Activated CD4-positive, alpha-beta T cell treated with anti-CD3 and anti-CD28 coated beads for 36 hours (primary cell): ENCODE measurements at regions of chr21 and their contacts with region 1.

Region 1: GRCh38 chr21:25464275-25464674 is 143.0 kb downstream of the MRPL39 start:
- DNase-seq: peak; percentile 43
- ATAC-seq: peak; percentile 77
- H3K4me3 Mint-ChIP-seq: peak overlapping the region; percentile 45
- H3K27ac Mint-ChIP-seq: peak overlapping the region; percentile 95
- H3K4me1 Mint-ChIP-seq: peaks cover 77% of the 10 kb centered on the region
- H3K27me3 Mint-ChIP-seq: no peaks in the 10 kb centered on the region

Region 2: DNA sequence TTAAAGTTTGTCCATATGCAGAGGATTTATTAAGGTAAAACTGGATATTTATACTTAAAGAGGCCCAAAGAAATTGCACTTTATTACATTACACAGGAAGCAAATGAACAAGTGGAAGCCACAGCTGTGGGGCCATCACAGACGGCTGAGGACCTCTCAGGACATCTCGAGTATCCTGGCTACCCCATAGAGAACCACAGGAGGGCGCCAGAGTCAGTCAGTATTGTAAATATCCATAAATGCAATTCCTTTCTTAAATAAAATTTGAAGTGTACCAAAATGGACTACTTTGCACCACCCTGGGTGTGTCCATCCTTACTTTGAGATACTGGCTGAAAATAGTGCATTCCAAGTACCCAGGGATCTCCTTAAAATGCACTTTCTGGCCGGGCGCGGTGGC is 114.2 kb before region 1 on chr21:
- CTCF ChIA-PET with region 1: no interaction called
- POLR2A ChIA-PET with region 1: no interaction called
- intact Hi-C with region 1: no loop called
- DNase-seq: peak; percentile 75
- ATAC-seq: peak; percentile 77
- H3K4me3 Mint-ChIP-seq: no peak overlapping the region
- H3K27ac Mint-ChIP-seq: no peak overlapping the region
- H3K4me1 Mint-ChIP-seq: peaks cover 7% of the 10 kb centered on the region
- H3K27me3 Mint-ChIP-seq: peaks cover 27% of the 10 kb centered on the region

Region 3: GRCh38 chr21:25501996-25502665 is 37.9 kb after region 1 on chr21:
- CTCF ChIA-PET with region 1: interaction called, 5 read pairs
- POLR2A ChIA-PET with region 1: no interaction called
- intact Hi-C with region 1: loop called (anchors 1 kb)
- DNase-seq: peak; percentile 83
- ATAC-seq: peak; percentile 87
- H3K4me3 Mint-ChIP-seq: peak overlapping the region; percentile 57
- H3K27ac Mint-ChIP-seq: peak overlapping the region; percentile 99
- H3K4me1 Mint-ChIP-seq: peaks cover 80% of the 10 kb centered on the region
- H3K27me3 Mint-ChIP-seq: no peaks in the 10 kb centered on the region

Region 4: GRCh38 chr21:25568246-25568645 is 104.0 kb after region 1 on chr21:
- CTCF ChIA-PET with region 1: interaction called, 4 read pairs
- POLR2A ChIA-PET with region 1: interaction called, 5 read pairs
- intact Hi-C with region 1: loop called in 1 of 2 experiments (anchors 1 kb)
- DNase-seq: peak; percentile 55
- ATAC-seq: no peak
- H3K4me3 Mint-ChIP-seq: peak overlapping the region; percentile 93
- H3K27ac Mint-ChIP-seq: peak overlapping the region; percentile 100
- H3K4me1 Mint-ChIP-seq: peaks cover 37% of the 10 kb centered on the region
- H3K27me3 Mint-ChIP-seq: no peaks in the 10 kb centered on the region